ENCODE measurements at regions of chr17 and their contacts with region 1.

Region 1: DNA sequence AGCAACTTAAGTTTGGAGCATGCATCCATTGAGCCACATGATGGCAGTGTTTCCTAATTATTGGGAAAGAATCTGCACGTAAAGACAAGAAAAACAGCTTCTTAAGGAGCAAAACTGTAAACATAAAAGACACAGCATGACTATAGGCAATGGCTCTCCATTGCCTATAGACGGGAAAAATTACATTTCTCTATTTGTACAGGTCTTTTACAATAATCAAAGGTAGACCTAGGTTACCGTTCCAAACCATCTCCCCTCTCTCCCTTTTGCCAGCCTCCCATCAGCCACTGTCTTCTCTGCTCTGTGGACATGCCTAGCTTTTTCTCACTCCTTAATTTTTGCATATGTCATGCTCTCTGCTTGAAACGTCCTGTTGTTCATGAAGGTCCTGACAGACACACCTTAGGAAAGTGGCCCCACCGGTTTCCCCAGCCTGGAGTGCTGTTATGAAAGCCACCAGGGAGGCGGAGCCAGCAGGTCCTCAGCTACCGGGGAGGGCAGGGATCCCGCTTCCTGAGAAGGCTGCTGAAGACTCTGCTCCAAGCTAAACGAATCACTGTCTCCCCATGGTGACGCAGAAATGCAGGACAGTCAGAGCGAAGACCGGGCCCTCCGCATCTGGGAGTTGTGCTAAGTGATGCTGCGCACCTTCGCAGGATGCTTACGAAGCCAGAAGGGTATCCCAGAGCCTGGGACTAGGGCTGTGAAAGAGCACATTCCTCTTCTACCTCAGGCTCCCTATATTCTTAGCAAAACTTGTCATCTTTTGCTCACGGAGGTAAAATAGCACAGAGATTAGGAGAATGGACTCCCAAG is 2.2 kb upstream of the SLC16A11 start:
- DNase-seq: peak; percentile 85
- ATAC-seq: peak; percentile 13
- H3K4me3 ChIP-seq: peak overlapping the region; percentile 42 to 67 (median 58)
- H3K4me3 Mint-ChIP-seq: peak overlapping the region; percentile 77
- H3K27ac ChIP-seq: peak overlapping the region; percentile 61 to 81
- H3K27ac Mint-ChIP-seq: peak overlapping the region; percentile 92
- H3K4me1 ChIP-seq: peaks cover 35 to 46% of the 10 kb centered on the region in 2 donors
- H3K4me1 Mint-ChIP-seq: peaks cover 39% of the 10 kb centered on the region
- H3K27me3 ChIP-seq: peaks cover 0 to 4% (median 0%) of the 10 kb centered on the region in 4 experiments
- H3K27me3 Mint-ChIP-seq: peaks cover 3% of the 10 kb centered on the region
- CTCF ChIP-seq: peak; percentile 82

Region 2: GRCh38 chr17:7035591-7036368 is 10.3 kb before region 1 on chr17 and contains the start of gene SLC16A13:
- CTCF ChIA-PET with region 1: interaction called, 21 read pairs
- POLR2A ChIA-PET with region 1: interaction called, 18 read pairs
- intact Hi-C with region 1: loop called (anchors 1 kb)
- DNase-seq: peak; percentile 99
- ATAC-seq: peak; percentile 94
- H3K4me3 ChIP-seq: peak within 1 kb of the TSS; percentile 58 to 97 (median 88)
- H3K4me3 Mint-ChIP-seq: peak within 1 kb of the TSS; percentile 94
- H3K27ac ChIP-seq: peak within 1 kb of the TSS; percentile 86 to 100
- H3K27ac Mint-ChIP-seq: peak within 1 kb of the TSS; percentile 98
- H3K4me1 ChIP-seq: peaks cover 18 to 38% of the 10 kb centered on the region in 2 donors
- H3K4me1 Mint-ChIP-seq: peaks cover 42% of the 10 kb centered on the region
- H3K27me3 ChIP-seq: no peaks in the 10 kb centered on the region
- H3K27me3 Mint-ChIP-seq: no peaks in the 10 kb centered on the region
- CTCF ChIP-seq: no peak
- total RNA-seq, gene SLC16A13: 21.7 and 21.9 TPM in 2 replicates

Region 3: GRCh38 chr17:7136266-7136877 is 90.3 kb after region 1 on chr17:
- CTCF ChIA-PET with region 1: interaction called, 584 read pairs
- POLR2A ChIA-PET with region 1: interaction called, 21 read pairs
- intact Hi-C with region 1: loop called (anchors 1 kb)
- DNase-seq: peak; percentile 86
- ATAC-seq: no peak
- H3K4me3 ChIP-seq: no peak overlapping the region
- H3K4me3 Mint-ChIP-seq: no peak overlapping the region
- H3K27ac ChIP-seq: no peak overlapping the region
- H3K27ac Mint-ChIP-seq: peak overlapping the region; percentile 47
- H3K4me1 ChIP-seq: peaks cover 22 to 28% of the 10 kb centered on the region in 2 donors
- H3K4me1 Mint-ChIP-seq: peaks cover 25% of the 10 kb centered on the region
- H3K27me3 ChIP-seq: peaks cover 0 to 12% (median 3%) of the 10 kb centered on the region in 4 experiments
- H3K27me3 Mint-ChIP-seq: peaks cover 17% of the 10 kb centered on the region
- CTCF ChIP-seq: peak; percentile 95

Region 4: DNA sequence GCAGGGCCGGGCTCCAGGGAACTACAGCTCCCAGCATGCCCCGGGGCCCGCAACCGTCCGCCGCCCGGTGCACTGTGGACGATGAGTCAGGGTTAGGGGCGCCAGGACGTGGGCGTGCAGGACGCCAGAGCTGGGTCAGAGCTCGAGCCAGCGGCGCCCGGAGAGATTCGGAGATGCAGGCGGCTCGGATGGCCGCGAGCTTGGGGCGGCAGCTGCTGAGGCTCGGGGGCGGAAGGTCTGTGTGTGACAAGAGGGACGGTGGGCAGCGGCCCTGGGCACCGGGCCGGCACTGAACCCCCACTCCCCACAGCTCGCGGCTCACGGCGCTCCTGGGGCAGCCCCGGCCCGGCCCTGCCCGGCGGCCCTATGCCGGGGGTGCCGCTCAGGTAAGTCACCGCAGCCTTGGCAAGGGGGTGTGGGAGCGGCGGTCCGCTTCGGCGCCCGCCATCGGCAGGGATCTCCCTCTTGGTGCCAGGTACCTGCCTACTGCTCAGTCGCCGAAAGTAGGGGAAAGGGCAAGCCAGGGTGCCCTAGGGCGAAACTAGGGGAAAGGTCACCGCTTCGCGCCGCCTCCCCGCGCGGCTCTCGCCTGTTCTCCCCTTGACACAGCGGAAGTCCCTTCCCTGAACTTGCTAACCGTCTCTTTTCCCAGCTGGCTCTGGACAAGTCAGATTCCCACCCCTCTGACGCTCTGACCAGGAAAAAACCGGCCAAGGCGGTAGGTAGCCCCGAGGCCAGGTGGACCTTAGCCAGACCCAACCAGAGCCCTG is 173.9 kb after region 1 on chr17 and contains the starts of genes ACADVL and DLG4:
- CTCF ChIA-PET with region 1: interaction called, 16 read pairs
- POLR2A ChIA-PET with region 1: interaction called, 3 read pairs
- intact Hi-C with region 1: no loop called
- DNase-seq: peak; percentile 78
- ATAC-seq: peak; percentile 76
- H3K4me3 ChIP-seq: peak within 1 kb of the TSS; percentile 31 to 86 (median 80)
- H3K4me3 Mint-ChIP-seq: peak within 1 kb of the TSS; percentile 97
- H3K27ac ChIP-seq: peak within 1 kb of the TSS; percentile 42 to 78
- H3K27ac Mint-ChIP-seq: peak within 1 kb of the TSS; percentile 93
- H3K4me1 ChIP-seq: peaks cover 20 to 47% of the 10 kb centered on the region in 2 donors
- H3K4me1 Mint-ChIP-seq: peaks cover 48% of the 10 kb centered on the region
- H3K27me3 ChIP-seq: no peaks in the 10 kb centered on the region
- H3K27me3 Mint-ChIP-seq: no peaks in the 10 kb centered on the region
- CTCF ChIP-seq: no peak
- total RNA-seq, gene ACADVL: 640 and 655 TPM in 2 replicates
- total RNA-seq, gene DLG4: 12.0 and 12.5 TPM in 2 replicates

Region 5: DNA sequence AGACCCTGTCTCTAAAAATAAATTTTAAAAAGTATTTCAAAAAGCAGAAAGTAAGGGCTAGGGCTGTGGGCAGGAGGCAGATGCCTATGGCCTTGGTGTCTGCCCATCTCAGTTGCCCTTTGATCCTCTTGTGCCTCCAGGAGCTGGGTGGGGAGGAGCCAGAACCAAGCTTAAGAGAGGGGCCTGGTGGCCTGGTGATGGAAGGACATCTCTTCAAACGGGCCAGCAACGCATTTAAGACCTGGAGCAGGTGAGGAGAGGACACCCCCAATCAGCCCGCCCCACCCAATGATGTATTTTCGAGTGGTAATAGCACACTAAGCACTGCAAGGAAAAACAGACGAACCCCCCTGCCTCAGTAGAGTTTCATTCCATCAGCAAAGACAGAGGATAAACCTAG is 298.3 kb after region 1 on chr17:
- CTCF ChIA-PET with region 1: interaction called, 11 read pairs
- POLR2A ChIA-PET with region 1: no interaction called
- intact Hi-C with region 1: no loop called
- DNase-seq: no peak
- ATAC-seq: no peak
- H3K4me3 ChIP-seq: no peak overlapping the region
- H3K4me3 Mint-ChIP-seq: no peak overlapping the region
- H3K27ac ChIP-seq: no peak overlapping the region
- H3K27ac Mint-ChIP-seq: no peak overlapping the region
- H3K4me1 ChIP-seq: peaks cover 0 to 6% of the 10 kb centered on the region in 2 donors
- H3K4me1 Mint-ChIP-seq: peaks cover 7% of the 10 kb centered on the region
- H3K27me3 ChIP-seq: no peaks in the 10 kb centered on the region
- H3K27me3 Mint-ChIP-seq: no peaks in the 10 kb centered on the region
- CTCF ChIP-seq: no peak

Measured in B cell (primary cell).